Activated CD8-positive, alpha-beta T cell treated with anti-CD3 and anti-CD28 coated beads for 36 hours (primary cell): ENCODE measurements at regions of chrX and their contacts with region 1.

Region 1: DNA sequence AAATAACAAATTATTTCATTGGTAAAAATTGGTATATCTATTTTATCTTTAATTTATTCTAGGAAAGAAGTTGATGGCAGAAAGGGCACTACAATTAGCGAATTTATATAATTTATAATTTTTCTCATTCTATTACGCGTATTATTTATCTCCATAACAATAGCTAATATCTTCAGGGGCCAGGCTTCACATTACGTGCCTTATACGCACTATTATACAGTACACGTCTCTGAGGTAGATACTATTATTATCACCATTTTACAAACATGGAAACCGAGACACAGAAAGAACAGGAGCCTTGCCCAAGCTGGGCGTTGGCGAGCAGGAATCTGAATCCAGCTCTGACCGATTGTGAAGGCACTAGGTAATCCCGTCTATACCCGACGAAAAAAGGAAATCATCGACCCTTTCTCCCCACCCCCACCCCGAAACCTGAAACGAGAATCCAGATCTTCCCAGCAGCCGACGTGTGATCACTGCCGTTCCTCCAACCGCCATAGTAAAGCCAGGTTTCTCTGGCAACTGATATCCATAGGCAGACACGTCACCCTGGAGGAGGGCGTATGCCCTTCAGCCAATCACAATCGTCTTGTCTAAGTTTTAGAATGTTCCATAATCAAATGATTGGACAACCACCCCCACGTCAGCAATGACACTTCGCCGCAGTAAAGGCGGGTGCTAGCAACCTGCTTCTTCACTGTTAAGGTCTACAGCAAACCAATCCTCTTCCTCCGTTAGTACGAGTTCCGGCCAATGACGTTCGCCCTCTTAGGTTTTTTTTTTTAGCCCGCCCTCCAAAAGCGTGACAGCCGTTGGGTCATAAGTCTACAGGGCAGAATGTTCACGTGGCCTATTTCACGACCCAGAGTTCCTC is at the start of gene MORF4L2:
- DNase-seq: peak; percentile 93
- ATAC-seq: peak; percentile 89
- H3K4me3 Mint-ChIP-seq: no peak within 1 kb of the TSS
- H3K27ac Mint-ChIP-seq: peak within 1 kb of the TSS; percentile 96
- H3K4me1 Mint-ChIP-seq: peaks cover 14% of the 10 kb centered on the region
- H3K27me3 Mint-ChIP-seq: no peaks in the 10 kb centered on the region
- CTCF ChIP-seq: no peak
- total RNA-seq, gene MORF4L2: 234 to 239 TPM

Region 2: DNA sequence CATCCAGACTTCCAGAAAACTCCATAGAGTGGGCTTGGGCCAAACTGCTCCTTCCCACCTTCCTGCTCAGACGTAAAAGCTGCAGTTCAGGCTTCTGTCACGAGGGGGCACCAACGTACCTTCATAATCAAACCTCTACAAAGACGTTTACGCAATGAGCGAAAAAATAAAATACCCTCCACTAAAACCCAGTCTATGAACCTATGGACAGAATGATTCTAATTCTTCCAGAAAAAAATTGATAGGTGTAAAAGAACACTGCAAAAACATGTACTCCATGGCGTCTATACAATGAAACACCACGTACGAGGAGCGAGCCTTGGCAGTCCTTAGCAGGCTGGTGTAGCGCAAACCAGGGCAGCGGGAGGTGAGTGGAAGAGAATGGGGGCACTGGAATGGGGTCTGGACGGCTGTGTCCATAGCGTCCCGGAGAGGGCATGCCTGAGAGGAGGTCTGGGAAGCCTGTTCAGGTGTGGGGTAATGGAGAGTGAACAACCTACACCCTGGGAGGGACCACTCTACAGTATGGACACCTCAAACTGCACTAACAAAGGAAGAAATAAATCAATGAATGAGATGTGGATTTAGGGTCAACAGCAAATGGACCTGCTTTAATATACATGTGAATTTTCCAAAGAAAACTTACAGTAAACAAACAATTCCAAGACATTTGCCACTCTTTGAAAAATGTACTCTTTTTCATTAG is 152.8 kb before region 1 on chrX:
- CTCF ChIA-PET with region 1: interaction called, 3 read pairs
- POLR2A ChIA-PET with region 1: no interaction called
- intact Hi-C with region 1: loop called (anchors 10 kb)
- DNase-seq: peak; percentile 84
- ATAC-seq: peak; percentile 74
- H3K4me3 Mint-ChIP-seq: peak overlapping the region; percentile 43
- H3K27ac Mint-ChIP-seq: no peak overlapping the region
- H3K4me1 Mint-ChIP-seq: peaks cover 3% of the 10 kb centered on the region
- H3K27me3 Mint-ChIP-seq: no peaks in the 10 kb centered on the region
- CTCF ChIP-seq: peak; percentile 67

Region 3: DNA sequence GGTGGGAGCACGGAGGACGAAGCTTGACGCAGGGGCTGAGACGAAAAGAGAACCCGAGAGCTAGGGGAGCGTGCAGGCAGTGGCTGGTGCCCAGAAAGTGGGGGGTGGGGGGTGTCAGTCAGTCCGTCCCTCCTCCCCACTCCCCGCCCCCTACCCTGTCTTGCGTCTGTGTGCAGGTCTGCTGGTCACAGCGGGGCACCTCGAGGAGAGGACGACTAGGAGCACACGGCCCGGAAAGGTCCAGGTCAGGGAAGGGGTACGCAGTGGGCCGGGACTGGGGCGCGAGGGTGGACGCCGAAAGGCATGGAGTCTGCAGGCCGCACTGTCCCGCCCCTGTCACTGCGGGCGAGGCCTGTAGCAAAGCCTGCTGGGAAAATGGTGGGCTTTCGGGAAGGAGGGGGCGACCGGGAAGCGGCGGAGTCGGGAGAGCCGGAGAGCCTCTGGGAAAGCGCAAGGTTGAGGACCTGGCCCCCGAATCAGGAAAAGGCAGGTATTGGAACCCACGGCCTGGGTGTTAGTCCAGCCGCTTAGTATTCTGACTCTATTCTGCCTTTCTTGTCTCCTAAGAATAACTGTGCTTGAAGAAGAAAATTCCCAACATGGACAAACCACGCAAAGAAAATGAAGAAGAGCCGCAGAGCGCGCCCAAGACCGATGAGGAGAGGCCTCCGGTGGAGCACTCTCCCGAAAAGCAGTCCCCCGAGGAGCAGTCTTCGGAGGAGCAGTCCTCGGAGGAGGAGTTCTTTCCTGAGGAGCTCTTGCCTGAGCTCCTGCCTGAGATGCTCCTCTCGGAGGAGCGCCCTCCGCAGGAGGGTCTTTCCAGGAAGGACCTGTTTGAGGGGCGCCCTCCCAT is 56.9 kb before region 1 on chrX:
- CTCF ChIA-PET with region 1: no interaction called
- POLR2A ChIA-PET with region 1: no interaction called
- intact Hi-C with region 1: loop called (anchors 10 kb)
- DNase-seq: peak; percentile 29
- ATAC-seq: peak; percentile 55
- H3K4me3 Mint-ChIP-seq: peak overlapping the region; percentile 88
- H3K27ac Mint-ChIP-seq: peak overlapping the region; percentile 89
- H3K4me1 Mint-ChIP-seq: peaks cover 18% of the 10 kb centered on the region
- H3K27me3 Mint-ChIP-seq: no peaks in the 10 kb centered on the region
- CTCF ChIP-seq: no peak

Region 4: GRCh38 chrX:103656632-103657031 is 29.8 kb before region 1 on chrX:
- CTCF ChIA-PET with region 1: no interaction called
- POLR2A ChIA-PET with region 1: no interaction called
- intact Hi-C with region 1: no loop called
- DNase-seq: no peak
- ATAC-seq: no peak
- H3K4me3 Mint-ChIP-seq: no peak overlapping the region
- H3K27ac Mint-ChIP-seq: no peak overlapping the region
- H3K4me1 Mint-ChIP-seq: no peaks in the 10 kb centered on the region
- H3K27me3 Mint-ChIP-seq: no peaks in the 10 kb centered on the region
- CTCF ChIP-seq: no peak

Region 5: DNA sequence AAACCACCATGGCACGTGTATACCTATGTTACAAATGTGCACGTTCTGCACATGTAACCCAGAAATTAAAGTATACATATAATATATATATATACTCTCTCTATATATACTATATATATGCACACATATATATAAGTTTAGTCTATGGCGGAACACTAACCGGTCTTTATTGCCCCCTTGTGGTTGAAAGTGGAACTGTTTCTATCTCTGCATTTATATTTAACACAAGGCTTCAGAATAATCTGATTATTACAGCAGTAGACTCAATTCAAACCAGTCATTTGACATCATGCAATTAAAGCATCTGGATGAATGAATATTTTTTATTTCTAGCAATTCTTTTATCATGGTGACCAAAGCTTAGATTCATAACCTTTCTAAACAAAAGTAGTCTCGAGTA is 131.1 kb after region 1 on chrX:
- CTCF ChIA-PET with region 1: interaction called, 10 read pairs
- POLR2A ChIA-PET with region 1: no interaction called
- intact Hi-C with region 1: loop called (anchors 5 kb)
- DNase-seq: peak; percentile 19
- ATAC-seq: peak; percentile 80
- H3K4me3 Mint-ChIP-seq: no peak overlapping the region
- H3K27ac Mint-ChIP-seq: no peak overlapping the region
- H3K4me1 Mint-ChIP-seq: no peaks in the 10 kb centered on the region
- H3K27me3 Mint-ChIP-seq: peaks cover 14% of the 10 kb centered on the region
- CTCF ChIP-seq: peak; percentile 49